CD8-positive, alpha-beta memory T cell (primary cell): ENCODE measurements at regions of chr10 and their contacts with region 1.

Region 1: DNA sequence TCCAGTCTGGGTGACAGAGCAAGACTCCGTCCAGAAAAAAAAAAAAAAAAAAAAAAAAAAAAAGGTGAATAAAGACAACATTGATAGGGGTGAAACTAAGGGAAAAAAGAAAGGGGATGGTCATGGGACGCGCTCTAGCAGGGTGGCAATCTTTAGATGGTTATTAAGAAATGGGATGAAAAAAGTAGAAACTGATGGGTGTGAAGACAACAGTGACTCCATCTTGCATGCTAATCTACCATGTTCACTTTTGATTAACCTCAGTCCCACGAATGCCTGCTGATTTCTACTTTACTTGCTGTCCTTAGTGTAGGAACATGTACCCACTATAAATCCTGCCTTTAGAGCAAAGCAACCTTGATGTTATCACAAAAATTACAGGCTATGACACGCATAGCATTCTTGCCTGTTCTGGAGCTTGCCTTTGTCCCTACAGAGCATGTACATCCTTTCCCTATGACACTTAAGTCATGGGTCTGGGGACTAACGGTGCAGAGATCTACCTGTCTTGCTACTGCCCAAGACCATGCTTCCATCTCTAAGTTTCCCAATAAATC is 38.5 kb downstream of the P4HA1 start:
- DNase-seq: no peak
- H3K4me3 ChIP-seq: no peak overlapping the region
- H3K4me3 Mint-ChIP-seq: no peak overlapping the region
- H3K27ac ChIP-seq: no peak overlapping the region
- H3K27ac Mint-ChIP-seq: peak overlapping the region in 1 of 8 donors; percentile 7
- H3K4me1 ChIP-seq: peaks cover 4% of the 10 kb centered on the region
- H3K4me1 Mint-ChIP-seq: peaks cover 8 to 13% (median 10%) of the 10 kb centered on the region in 3 donors
- H3K27me3 ChIP-seq: no peaks in the 10 kb centered on the region
- H3K27me3 Mint-ChIP-seq: no peaks in the 10 kb centered on the region

Region 2: DNA sequence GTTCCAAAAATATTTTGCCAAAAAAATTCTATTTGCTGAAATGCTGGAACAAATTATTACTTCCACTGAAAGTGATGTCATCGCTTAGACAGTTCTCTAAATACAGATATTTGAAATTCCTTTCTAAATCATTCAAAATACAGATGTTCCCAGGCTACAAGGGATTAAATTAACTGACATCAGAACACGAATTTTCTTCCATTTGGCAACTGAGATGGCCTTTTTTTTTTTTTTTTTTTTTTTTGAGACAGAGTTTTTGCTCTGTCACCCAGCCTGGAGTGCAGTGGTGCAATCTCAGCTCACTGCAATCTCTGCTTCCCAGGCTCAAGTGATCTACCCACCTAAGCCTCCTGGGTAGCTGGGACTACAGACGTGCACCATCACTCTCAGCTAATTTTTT is 18.5 kb before region 1 on chr10:
- CTCF ChIA-PET with region 1: interaction called, 3 read pairs
- POLR2A ChIA-PET with region 1: interaction called, 15 read pairs
- DNase-seq: no peak
- H3K4me3 ChIP-seq: no peak overlapping the region
- H3K4me3 Mint-ChIP-seq: no peak overlapping the region
- H3K27ac ChIP-seq: no peak overlapping the region
- H3K27ac Mint-ChIP-seq: no peak overlapping the region
- H3K4me1 ChIP-seq: no peaks in the 10 kb centered on the region
- H3K4me1 Mint-ChIP-seq: no peaks in the 10 kb centered on the region
- H3K27me3 ChIP-seq: no peaks in the 10 kb centered on the region
- H3K27me3 Mint-ChIP-seq: no peaks in the 10 kb centered on the region

Region 3: GRCh38 chr10:73126343-73126742 is 68.2 kb after region 1 on chr10:
- CTCF ChIA-PET with region 1: no interaction called
- POLR2A ChIA-PET with region 1: no interaction called
- DNase-seq: no peak
- H3K4me3 ChIP-seq: no peak overlapping the region
- H3K4me3 Mint-ChIP-seq: no peak overlapping the region
- H3K27ac ChIP-seq: no peak overlapping the region
- H3K27ac Mint-ChIP-seq: no peak overlapping the region
- H3K4me1 ChIP-seq: no peaks in the 10 kb centered on the region
- H3K4me1 Mint-ChIP-seq: no peaks in the 10 kb centered on the region
- H3K27me3 ChIP-seq: no peaks in the 10 kb centered on the region
- H3K27me3 Mint-ChIP-seq: no peaks in the 10 kb centered on the region